Esophagus muscularis mucosa (tissue), 4 donors: ENCODE measurements at regions of chr1 and their contacts with region 1.

Region 1: DNA sequence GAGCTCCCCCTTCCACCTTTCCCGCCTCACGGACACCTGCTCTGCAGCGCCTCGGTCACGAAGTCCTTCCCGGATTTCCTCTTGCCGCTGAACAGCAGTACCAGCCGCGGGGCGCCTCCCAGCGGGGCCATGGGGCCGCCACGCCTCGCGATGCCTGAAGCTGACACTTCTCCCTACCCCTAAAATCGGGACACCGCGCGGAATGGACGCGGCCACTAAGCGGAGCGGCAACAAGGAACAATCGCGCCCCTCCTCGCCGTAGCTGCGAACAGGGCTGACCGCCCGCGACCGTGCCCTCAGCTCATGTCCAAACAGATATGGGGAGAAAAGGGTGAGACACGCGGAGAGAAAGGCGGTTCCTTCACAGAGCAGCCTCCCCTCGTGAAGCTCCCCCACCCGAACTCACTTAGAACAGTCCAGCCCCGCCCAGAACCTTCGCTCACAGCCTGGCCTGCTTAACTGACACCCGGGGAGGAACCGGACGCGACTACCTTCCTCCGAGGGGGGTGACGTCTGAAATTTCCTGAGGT is at the start of gene PMVK:
- DNase-seq: peak; percentile 99
- H3K4me3 ChIP-seq: peak within 1 kb of the TSS; percentile 67 to 72 (median 70)
- H3K27ac ChIP-seq: peak within 1 kb of the TSS; percentile 94 to 97 (median 96)
- H3K4me1 ChIP-seq: peaks cover 32 to 58% (median 47%) of the 10 kb centered on the region in 4 donors
- H3K27me3 ChIP-seq: no peaks in the 10 kb centered on the region
- CTCF ChIP-seq: peak in 2 of 3 experiments; percentile 23 to 47
- EP300 ChIP-seq: peak; percentile 57
- POLR2A ChIP-seq: no peak
- total RNA-seq, gene PMVK: 15.9 to 26.2 (median 20.0) TPM

Region 2: GRCh38 chr1:154553056-154554030 is 383.3 kb before region 1 on chr1:
- intact Hi-C with region 1: loop called (anchors 5 kb)
- DNase-seq: no peak
- H3K4me3 ChIP-seq: no peak overlapping the region
- H3K27ac ChIP-seq: peak overlapping the region in 3 of 4 donors; percentile 8 to 33 (median 20)
- H3K4me1 ChIP-seq: peaks cover 30 to 68% (median 48%) of the 10 kb centered on the region in 4 donors
- H3K27me3 ChIP-seq: no peaks in the 10 kb centered on the region
- CTCF ChIP-seq: no peak
- EP300 ChIP-seq: no peak
- POLR2A ChIP-seq: no peak

Region 3: GRCh38 chr1:154896771-154897391 is 39.7 kb before region 1 on chr1:
- intact Hi-C with region 1: no loop called
- DNase-seq: no peak
- H3K4me3 ChIP-seq: no peak overlapping the region
- H3K27ac ChIP-seq: no peak overlapping the region
- H3K4me1 ChIP-seq: no peaks in the 10 kb centered on the region
- H3K27me3 ChIP-seq: no peaks in the 10 kb centered on the region
- CTCF ChIP-seq: no peak
- EP300 ChIP-seq: no peak
- POLR2A ChIP-seq: no peak

Region 4: DNA sequence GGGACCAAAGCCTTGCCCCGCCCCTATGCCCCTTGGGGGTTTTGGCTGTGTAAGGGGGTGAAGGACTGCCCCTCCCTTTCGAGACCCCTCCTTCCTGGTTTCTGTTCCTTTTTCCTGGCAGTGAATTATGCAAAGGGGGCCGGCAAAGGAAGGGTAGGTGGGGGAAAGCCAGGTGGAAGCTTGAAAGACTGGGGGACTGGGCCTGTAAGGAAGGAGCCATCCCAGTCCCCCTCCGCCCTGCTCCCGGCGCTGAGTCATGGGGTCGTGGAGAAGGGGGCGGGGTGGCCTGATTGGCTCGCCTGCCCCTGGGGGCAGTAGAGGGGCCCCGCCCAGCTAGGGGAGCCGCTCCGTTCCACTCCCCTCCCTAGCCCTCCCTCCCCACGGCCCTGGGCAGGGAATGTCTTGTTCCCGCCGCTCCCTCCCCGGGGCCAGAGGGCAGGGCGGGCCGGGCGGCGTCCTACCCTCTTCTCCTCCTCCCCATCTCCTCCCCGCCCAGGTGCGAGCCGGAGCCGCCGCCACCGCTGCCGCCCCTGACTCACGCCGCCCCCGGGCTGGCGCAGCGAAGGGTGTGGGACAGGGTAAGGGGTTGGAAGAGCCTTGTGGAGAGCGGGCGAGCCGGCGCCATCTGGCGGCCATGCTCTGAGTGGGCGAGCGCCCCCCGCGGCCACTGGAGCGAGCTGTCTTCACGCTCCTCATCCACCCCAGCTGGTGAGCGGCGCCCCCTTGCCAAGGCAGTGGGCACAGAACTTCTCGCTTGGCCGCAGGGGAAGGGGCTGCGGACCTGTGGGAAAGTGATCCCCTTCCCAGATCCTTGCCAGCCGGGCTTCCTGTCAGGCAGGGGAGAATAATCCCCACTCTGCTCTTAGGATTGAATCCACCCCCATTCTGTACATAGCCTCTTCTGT is 80.7 kb after region 1 on chr1:
- intact Hi-C with region 1: loop called (anchors 5 kb)
- DNase-seq: peak; percentile 97
- H3K4me3 ChIP-seq: peak overlapping the region; percentile 54 to 66 (median 58)
- H3K27ac ChIP-seq: peak overlapping the region; percentile 86 to 92 (median 90)
- H3K4me1 ChIP-seq: peaks cover 30 to 54% (median 41%) of the 10 kb centered on the region in 4 donors
- H3K27me3 ChIP-seq: no peaks in the 10 kb centered on the region
- CTCF ChIP-seq: peak in 2 of 3 experiments; percentile 98 to 99
- EP300 ChIP-seq: no peak
- POLR2A ChIP-seq: no peak

Region 5: DNA sequence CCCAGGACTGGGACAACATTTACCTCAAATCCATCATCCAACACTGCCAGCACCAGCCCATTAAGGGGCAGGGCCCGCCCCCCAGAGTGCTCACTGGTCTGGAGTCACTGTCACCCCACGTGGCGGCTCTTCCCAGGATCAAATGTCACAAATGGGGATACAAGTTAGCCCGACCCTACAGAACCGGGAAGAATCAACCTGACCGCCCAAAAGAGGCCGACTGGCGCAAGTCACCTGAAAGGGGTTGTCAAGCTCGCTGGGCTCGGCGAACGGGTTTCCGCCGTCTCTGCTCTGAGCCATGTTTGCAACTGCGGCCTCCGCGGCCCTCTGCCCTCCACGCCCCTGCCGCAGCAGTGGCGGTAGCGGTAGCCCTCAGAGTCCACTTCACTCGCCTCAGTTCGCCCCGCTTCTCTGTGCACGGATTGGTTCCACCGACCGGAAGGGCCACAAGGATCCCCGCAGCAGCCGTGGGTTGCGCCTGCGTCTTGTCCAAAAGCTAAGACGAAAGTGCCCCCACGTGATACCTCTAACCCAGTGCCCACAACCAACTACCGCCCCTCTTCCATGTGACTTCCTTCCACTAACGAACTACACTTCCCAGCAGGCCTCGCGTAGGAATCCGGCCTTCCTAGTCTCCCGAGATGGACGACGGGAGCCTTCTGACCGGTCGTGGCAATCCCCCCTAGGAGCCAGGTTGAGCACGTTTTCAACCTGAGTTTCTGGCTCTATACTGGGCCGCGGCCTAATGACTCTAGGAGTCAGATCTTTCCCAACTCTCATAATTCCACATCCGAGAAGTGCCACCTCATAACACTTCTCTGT is 325.4 kb after region 1 on chr1 and contains the start of gene SCAMP3:
- intact Hi-C with region 1: no loop called
- DNase-seq: peak; percentile 99
- H3K4me3 ChIP-seq: peak within 1 kb of the TSS; percentile 74 to 90 (median 76)
- H3K27ac ChIP-seq: peak within 1 kb of the TSS; percentile 81 to 89 (median 85)
- H3K4me1 ChIP-seq: peaks cover 16 to 27% (median 24%) of the 10 kb centered on the region in 4 donors
- H3K27me3 ChIP-seq: no peaks in the 10 kb centered on the region
- CTCF ChIP-seq: peak in 1 of 3 experiments; percentile 26
- EP300 ChIP-seq: no peak
- POLR2A ChIP-seq: peak; percentile 28
- total RNA-seq, gene SCAMP3: 33.6 to 56.0 (median 43.5) TPM

Region 6: DNA sequence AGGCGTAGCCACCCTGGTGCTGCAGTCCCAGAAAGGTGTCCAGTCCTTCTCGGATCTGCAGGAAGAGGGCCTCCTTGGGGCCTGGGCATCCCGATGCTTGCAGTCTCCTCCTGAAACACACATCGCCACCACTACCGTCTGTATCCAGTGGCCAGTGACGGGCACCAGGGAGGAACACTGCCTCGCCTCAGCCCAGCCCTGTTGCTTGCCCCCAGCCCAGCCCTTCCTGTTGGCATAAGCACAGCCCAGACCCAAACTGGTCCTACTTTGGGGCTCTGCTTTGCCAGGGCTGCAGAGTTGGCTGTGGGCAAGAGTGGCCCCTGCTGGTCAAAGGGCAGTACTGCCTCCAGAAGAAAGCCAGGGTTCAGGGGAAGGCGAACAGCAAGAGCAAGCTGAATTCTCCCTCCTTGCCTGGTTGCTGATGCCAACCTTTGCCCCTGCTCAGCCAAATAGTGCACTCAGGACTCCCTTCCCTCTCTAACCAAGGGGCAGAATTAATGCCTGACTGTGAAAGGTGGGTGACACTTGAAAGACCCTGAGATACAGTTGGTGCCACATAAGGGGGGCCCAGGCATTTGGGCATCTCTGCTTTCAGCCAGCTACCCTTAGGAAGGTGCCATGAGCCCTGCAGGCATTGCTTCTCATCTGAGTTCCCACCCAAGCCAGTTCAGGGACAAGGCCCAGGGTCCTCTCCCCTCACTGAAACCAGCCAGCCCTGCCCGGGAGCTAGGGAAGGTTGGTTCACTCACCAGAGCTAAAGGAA is 1052.8 kb after region 1 on chr1:
- intact Hi-C with region 1: no loop called
- DNase-seq: peak; percentile 96
- H3K4me3 ChIP-seq: peak overlapping the region; percentile 49 to 59 (median 50)
- H3K27ac ChIP-seq: peak overlapping the region; percentile 68 to 77 (median 72)
- H3K4me1 ChIP-seq: peaks cover 7 to 29% (median 19%) of the 10 kb centered on the region in 4 donors
- H3K27me3 ChIP-seq: no peaks in the 10 kb centered on the region
- CTCF ChIP-seq: peak; percentile 98 to 99 (median 99)
- EP300 ChIP-seq: no peak
- POLR2A ChIP-seq: no peak